ENCODE measurements at regions of chr7 and their contacts with region 1.

Region 1: GRCh38 chr7:5665094-5666025 is 116.1 kb downstream of the RNF216 start:
- DNase-seq: peak; percentile 91

Region 2: GRCh38 chr7:5494683-5495561 is 170.4 kb before region 1 on chr7:
- in situ Hi-C with region 1: loop called (anchors 10 kb)
- DNase-seq: peak; percentile 91